ENCODE measurements at regions of chr11 and their contacts with region 1.

Region 1: DNA sequence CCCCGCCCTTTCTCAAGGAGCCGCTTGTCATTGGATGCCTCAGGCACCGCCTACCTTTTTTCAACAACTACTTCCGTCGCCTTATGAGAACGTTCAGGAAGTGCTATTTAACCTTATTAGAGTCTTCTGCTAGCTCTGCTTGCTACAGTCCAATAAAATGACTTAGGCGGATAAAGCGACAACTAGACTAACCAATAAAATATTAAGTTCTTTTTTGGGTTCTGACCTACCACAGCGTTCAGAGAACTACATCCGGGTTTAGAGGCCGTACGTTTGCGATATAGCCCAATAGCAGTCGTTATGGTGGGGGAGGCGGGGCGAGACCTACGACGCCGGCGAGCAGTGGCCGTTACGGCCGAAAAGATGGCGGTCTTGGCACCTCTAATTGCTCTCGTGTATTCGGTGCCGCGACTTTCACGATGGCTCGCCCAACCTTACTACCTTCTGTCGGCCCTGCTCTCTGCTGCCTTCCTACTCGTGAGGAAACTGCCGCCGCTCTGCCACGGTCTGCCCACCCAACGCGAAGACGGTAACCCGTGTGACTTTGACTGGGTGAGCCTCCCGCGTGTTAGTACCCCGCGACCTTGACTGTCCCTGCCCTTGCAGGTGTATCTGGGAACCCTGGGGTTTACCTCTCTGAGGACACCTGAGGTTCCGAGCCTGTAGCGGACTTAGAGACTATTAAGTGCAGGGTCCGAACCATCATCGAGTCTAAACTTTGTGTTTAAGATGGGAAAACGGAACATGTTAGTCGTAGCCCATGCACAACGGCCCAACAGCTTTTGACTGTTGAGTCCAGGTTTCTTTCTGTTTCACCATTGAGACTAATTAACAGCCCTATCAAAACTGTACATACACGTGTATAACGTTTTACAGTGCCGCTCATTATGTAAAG is at the start of gene TMX2:
- DNase-seq: peak; percentile 79 to 97 (median 84)
- ATAC-seq: peak; percentile 89
- H3K4me3 ChIP-seq: peak within 1 kb of the TSS; percentile 95
- H3K4me3 Mint-ChIP-seq: peak within 1 kb of the TSS; percentile 96
- H3K27ac ChIP-seq: peak within 1 kb of the TSS; percentile 85 to 95
- H3K27ac Mint-ChIP-seq: peak within 1 kb of the TSS; percentile 88
- H3K4me1 ChIP-seq: peaks cover 30% of the 10 kb centered on the region
- H3K4me1 Mint-ChIP-seq: peaks cover 53% of the 10 kb centered on the region
- H3K27me3 ChIP-seq: no peaks in the 10 kb centered on the region
- H3K27me3 Mint-ChIP-seq: no peaks in the 10 kb centered on the region
- CTCF ChIP-seq: no peak
- total RNA-seq, gene TMX2: 30.0 to 30.5 TPM

Region 2: DNA sequence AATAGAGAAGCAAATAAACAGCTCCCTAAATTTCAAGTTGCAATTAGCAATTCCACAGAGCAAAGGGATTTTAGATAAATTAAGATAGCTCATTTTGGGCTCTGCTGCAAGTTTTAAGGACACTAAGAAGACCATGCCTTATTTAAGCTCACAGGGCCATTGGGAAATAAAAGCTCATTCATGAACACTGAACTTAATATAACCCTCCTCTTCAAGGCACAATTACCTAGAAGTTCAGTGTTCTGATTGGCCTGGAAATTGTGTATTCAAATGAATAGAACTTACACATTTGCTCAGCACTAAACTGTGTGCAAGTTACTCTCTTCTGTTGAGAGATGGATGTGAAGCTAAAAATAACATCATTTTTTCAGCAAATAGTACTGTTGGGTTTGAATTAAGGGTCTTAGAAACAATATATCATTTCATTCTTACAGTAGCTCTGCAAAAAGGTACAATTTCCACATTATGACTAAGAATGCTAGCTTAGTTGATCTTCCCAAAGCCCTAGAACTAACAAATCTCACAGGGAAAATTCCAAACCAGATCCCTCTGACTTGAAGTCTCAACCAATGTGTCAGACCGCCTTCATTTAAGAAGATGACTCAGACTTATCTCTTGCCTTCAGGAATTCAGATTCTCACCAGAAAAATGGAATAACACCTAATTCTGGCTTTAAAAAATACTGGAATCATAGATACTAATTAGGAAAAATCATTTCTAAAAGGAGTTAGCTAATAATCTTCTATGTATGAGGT is 618.1 kb before region 1 on chr11:
- CTCF ChIA-PET with region 1: no interaction called
- POLR2A ChIA-PET with region 1: no interaction called
- intact Hi-C with region 1: no loop called
- DNase-seq: no peak
- ATAC-seq: no peak
- H3K4me3 ChIP-seq: no peak overlapping the region
- H3K4me3 Mint-ChIP-seq: no peak overlapping the region
- H3K27ac ChIP-seq: no peak overlapping the region
- H3K27ac Mint-ChIP-seq: no peak overlapping the region
- H3K4me1 ChIP-seq: no peaks in the 10 kb centered on the region
- H3K4me1 Mint-ChIP-seq: no peaks in the 10 kb centered on the region
- H3K27me3 ChIP-seq: no peaks in the 10 kb centered on the region
- H3K27me3 Mint-ChIP-seq: peaks cover 12% of the 10 kb centered on the region
- CTCF ChIP-seq: no peak

Region 3: DNA sequence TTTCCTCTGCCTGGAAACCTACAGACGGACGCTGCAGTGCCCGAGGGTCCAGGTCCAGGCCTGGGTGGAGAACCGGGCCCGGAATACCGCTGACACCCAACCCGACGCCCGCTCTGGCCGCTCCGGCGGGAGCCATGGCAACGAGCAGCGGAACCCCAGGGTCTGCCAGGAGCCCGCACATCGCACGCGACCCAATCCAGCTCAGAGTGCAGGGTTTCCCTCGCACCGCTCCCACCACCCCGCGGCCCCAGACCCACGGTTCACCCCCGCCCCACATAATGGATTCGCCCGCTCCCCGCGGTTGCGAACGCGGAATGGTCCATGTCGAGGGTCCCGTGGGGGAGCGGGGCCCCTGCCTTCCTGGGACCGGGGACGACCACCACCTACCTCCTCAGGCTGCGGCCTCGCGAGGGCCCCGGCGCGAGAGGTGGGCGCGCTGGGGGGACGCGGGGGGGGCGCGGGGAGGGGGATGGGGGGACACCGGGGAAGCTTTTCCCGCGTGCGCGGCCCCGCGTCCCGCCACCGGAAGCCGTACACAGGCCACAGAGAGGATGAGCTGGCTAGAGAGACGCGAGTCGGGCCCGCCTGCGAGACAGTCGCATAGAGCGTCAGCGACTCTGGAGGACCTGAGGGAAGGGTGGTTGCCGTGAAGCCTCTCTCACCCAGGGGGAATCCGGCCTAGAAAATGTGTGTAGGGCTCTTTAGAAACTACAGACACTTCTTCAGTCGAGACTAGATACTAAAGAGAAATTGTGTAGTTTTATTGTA is 377.0 kb before region 1 on chr11 and contains the start of gene SSRP1:
- CTCF ChIA-PET with region 1: no interaction called
- POLR2A ChIA-PET with region 1: no interaction called
- intact Hi-C with region 1: loop called in 1 of 2 experiments (anchors 10 kb)
- DNase-seq: peak; percentile 77 to 95 (median 86)
- ATAC-seq: peak; percentile 97
- H3K4me3 ChIP-seq: peak within 1 kb of the TSS; percentile 80
- H3K4me3 Mint-ChIP-seq: peak within 1 kb of the TSS; percentile 89
- H3K27ac ChIP-seq: peak within 1 kb of the TSS; percentile 72 to 85
- H3K27ac Mint-ChIP-seq: peak within 1 kb of the TSS; percentile 96
- H3K4me1 ChIP-seq: peaks cover 29% of the 10 kb centered on the region
- H3K4me1 Mint-ChIP-seq: peaks cover 33% of the 10 kb centered on the region
- H3K27me3 ChIP-seq: no peaks in the 10 kb centered on the region
- H3K27me3 Mint-ChIP-seq: no peaks in the 10 kb centered on the region
- CTCF ChIP-seq: no peak
- total RNA-seq, gene SSRP1: 36.7 to 41.2 TPM

Region 4: GRCh38 chr11:57567515-57568329 is 144.8 kb before region 1 on chr11 and contains the start of gene UBE2L6:
- CTCF ChIA-PET with region 1: interaction called, 4 read pairs
- POLR2A ChIA-PET with region 1: interaction called, 3 read pairs
- intact Hi-C with region 1: loop called (anchors 1 to 2 kb)
- DNase-seq: peak; percentile 35 to 94 (median 74)
- ATAC-seq: peak; percentile 76
- H3K4me3 ChIP-seq: peak within 1 kb of the TSS; percentile 95
- H3K4me3 Mint-ChIP-seq: peak within 1 kb of the TSS; percentile 100
- H3K27ac ChIP-seq: peak within 1 kb of the TSS; percentile 80 to 82
- H3K27ac Mint-ChIP-seq: peak within 1 kb of the TSS; percentile 92
- H3K4me1 ChIP-seq: peaks cover 33% of the 10 kb centered on the region
- H3K4me1 Mint-ChIP-seq: peaks cover 53% of the 10 kb centered on the region
- H3K27me3 ChIP-seq: no peaks in the 10 kb centered on the region
- H3K27me3 Mint-ChIP-seq: no peaks in the 10 kb centered on the region
- CTCF ChIP-seq: no peak
- total RNA-seq, gene UBE2L6: 35.0 to 36.2 TPM

Region 5: GRCh38 chr11:57657194-57658022 is 55.1 kb before region 1 on chr11 and contains the start of gene CLP1:
- CTCF ChIA-PET with region 1: no interaction called
- POLR2A ChIA-PET with region 1: interaction called, 9 read pairs
- intact Hi-C with region 1: loop called in 1 of 2 experiments (anchors 2 kb)
- DNase-seq: peak; percentile 94 to 100 (median 98)
- ATAC-seq: peak; percentile 95
- H3K4me3 ChIP-seq: peak within 1 kb of the TSS; percentile 93
- H3K4me3 Mint-ChIP-seq: peak within 1 kb of the TSS; percentile 96
- H3K27ac ChIP-seq: peak within 1 kb of the TSS; percentile 92 to 93
- H3K27ac Mint-ChIP-seq: peak within 1 kb of the TSS; percentile 90
- H3K4me1 ChIP-seq: peaks cover 24% of the 10 kb centered on the region
- H3K4me1 Mint-ChIP-seq: peaks cover 24% of the 10 kb centered on the region
- H3K27me3 ChIP-seq: no peaks in the 10 kb centered on the region
- H3K27me3 Mint-ChIP-seq: no peaks in the 10 kb centered on the region
- CTCF ChIP-seq: no peak
- total RNA-seq, gene CLP1: 21.8 to 24.2 TPM

Region 6: DNA sequence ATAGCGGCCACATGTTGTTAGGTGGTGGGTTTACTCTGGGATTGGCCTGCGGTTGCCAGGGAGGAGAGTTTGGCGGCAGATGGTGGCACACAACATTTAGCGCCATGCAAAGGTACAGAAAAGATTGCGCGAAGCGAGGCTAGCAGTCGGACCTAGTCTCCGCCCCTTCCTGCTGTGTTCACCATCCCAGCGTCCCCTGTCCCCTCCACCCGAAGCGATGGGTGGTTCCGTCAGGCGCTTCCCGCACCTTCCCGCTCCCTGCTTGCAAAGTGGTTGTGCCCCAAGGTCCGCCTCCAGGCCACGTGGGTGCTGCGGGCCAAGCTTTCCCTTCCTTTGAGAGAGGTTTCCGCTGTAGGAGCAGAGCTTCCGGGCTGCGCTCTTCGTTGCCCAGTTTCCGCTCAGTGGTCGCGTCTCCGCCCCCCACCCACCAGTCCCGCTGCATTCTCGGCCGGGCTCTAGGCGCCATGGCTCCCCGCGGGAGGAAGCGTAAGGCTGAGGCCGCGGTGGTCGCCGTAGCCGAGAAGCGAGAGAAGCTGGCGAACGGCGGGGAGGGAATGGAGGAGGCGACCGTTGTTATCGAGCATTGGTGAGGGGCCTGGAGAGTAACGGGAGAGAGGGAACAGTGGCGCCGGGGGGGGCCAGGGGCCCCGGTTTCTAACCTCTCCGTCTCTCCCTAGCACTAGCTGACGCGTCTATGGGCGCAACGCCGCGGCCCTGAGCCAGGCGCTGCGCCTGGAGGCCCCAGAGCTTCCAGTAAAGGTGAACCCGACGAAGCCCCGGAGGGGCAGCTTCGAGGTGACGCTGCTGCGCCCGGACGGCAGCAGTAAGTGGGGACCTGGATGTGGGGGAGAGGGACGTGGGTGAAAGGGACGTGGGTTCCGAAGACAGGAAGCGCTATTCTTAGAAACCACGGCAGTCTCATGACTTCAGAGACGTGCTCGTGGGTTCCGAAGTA is 28.9 kb after region 1 on chr11 and contains the start of gene SELENOH:
- CTCF ChIA-PET with region 1: no interaction called
- POLR2A ChIA-PET with region 1: interaction called, 40 read pairs
- intact Hi-C with region 1: loop called (anchors 1 to 2 kb)
- DNase-seq: peak; percentile 82 to 97 (median 90)
- ATAC-seq: peak; percentile 89
- H3K4me3 ChIP-seq: peak within 1 kb of the TSS; percentile 92
- H3K4me3 Mint-ChIP-seq: peak within 1 kb of the TSS; percentile 97
- H3K27ac ChIP-seq: peak within 1 kb of the TSS; percentile 91 to 96
- H3K27ac Mint-ChIP-seq: peak within 1 kb of the TSS; percentile 95
- H3K4me1 ChIP-seq: peaks cover 31% of the 10 kb centered on the region
- H3K4me1 Mint-ChIP-seq: peaks cover 38% of the 10 kb centered on the region
- H3K27me3 ChIP-seq: no peaks in the 10 kb centered on the region
- H3K27me3 Mint-ChIP-seq: no peaks in the 10 kb centered on the region
- CTCF ChIP-seq: no peak
- total RNA-seq, gene SELENOH: 48.0 to 48.5 TPM

Region 7: DNA sequence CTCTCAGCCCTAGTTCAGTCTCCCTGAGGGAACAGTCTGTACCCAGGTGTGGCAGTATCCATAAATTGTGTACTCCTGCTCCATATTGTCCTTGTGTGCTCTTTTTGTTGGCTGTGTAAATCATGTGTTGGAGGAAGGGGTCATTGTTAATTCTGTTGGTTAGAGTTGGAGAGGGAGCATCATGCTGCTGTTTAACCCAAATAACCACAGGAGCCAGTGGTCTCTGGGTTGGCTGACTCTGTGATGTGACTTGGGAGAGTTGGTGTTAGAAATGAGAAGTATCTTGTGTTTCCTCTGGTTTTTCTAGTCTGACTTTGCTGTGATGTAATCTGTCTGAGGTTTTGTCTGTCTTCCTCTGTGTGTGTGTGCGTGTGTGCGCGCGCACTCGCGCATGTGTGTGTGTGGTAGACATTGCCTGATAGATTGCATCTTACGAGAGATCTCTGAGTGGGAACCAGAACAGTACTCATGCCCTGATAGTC is 79.6 kb after region 1 on chr11:
- CTCF ChIA-PET with region 1: no interaction called
- POLR2A ChIA-PET with region 1: no interaction called
- intact Hi-C with region 1: loop called in 1 of 2 experiments (anchors 1 kb)
- DNase-seq: peak; percentile 76 to 97 (median 84)
- ATAC-seq: peak; percentile 94
- H3K4me3 ChIP-seq: peak overlapping the region; percentile 21
- H3K4me3 Mint-ChIP-seq: peak overlapping the region; percentile 80
- H3K27ac ChIP-seq: peak overlapping the region; percentile 79 to 83
- H3K27ac Mint-ChIP-seq: peak overlapping the region; percentile 95
- H3K4me1 ChIP-seq: peaks cover 31% of the 10 kb centered on the region
- H3K4me1 Mint-ChIP-seq: peaks cover 34% of the 10 kb centered on the region
- H3K27me3 ChIP-seq: no peaks in the 10 kb centered on the region
- H3K27me3 Mint-ChIP-seq: no peaks in the 10 kb centered on the region
- CTCF ChIP-seq: no peak

Region 8: GRCh38 chr11:58046231-58046630 is 333.7 kb after region 1 on chr11:
- CTCF ChIA-PET with region 1: no interaction called
- POLR2A ChIA-PET with region 1: no interaction called
- intact Hi-C with region 1: no loop called
- DNase-seq: no peak
- ATAC-seq: no peak
- H3K4me3 ChIP-seq: no peak overlapping the region
- H3K4me3 Mint-ChIP-seq: no peak overlapping the region
- H3K27ac ChIP-seq: no peak overlapping the region
- H3K27ac Mint-ChIP-seq: no peak overlapping the region
- H3K4me1 ChIP-seq: no peaks in the 10 kb centered on the region
- H3K4me1 Mint-ChIP-seq: no peaks in the 10 kb centered on the region
- H3K27me3 ChIP-seq: peaks cover 3 to 5% of the 10 kb centered on the region in 2 experiments
- H3K27me3 Mint-ChIP-seq: peaks cover 26% of the 10 kb centered on the region
- CTCF ChIP-seq: no peak

Region 9: GRCh38 chr11:59216641-59217564 is 1504.4 kb after region 1 on chr11:
- CTCF ChIA-PET with region 1: no interaction called
- POLR2A ChIA-PET with region 1: no interaction called
- intact Hi-C with region 1: no loop called
- DNase-seq: peak in 4 of 14 experiments; percentile 6 to 69 (median 52)
- ATAC-seq: no peak
- H3K4me3 ChIP-seq: no peak overlapping the region
- H3K4me3 Mint-ChIP-seq: peak overlapping the region; percentile 42
- H3K27ac ChIP-seq: no peak overlapping the region
- H3K27ac Mint-ChIP-seq: no peak overlapping the region
- H3K4me1 ChIP-seq: peaks cover 9% of the 10 kb centered on the region
- H3K4me1 Mint-ChIP-seq: peaks cover 13% of the 10 kb centered on the region
- H3K27me3 ChIP-seq: no peaks in the 10 kb centered on the region
- H3K27me3 Mint-ChIP-seq: no peaks in the 10 kb centered on the region
- CTCF ChIP-seq: no peak

Measured in CD4-positive, alpha-beta T cell (primary cell).